AG04450 (cell line): ENCODE measurements at regions of chr11 and their contacts with region 1.

Region 1: GRCh38 chr11:128956401-128957201 is 13.9 kb upstream of the TP53AIP1 start:
- DNase-seq: peak; percentile 47
- H3K4me3 ChIP-seq: no peak overlapping the region
- H3K27ac ChIP-seq: no peak overlapping the region
- H3K27me3 ChIP-seq: peaks cover 5% of the 10 kb centered on the region
- CTCF ChIP-seq: peak; percentile 74

Region 2: GRCh38 chr11:128643661-128644317 is 312.8 kb before region 1 on chr11:
- CTCF ChIA-PET with region 1: no interaction called
- POLR2A ChIA-PET with region 1: no interaction called
- DNase-seq: no peak
- H3K4me3 ChIP-seq: no peak overlapping the region
- H3K27ac ChIP-seq: no peak overlapping the region
- H3K27me3 ChIP-seq: peaks cover 12% of the 10 kb centered on the region
- CTCF ChIP-seq: no peak

Region 3: GRCh38 chr11:128879817-128880216 is 76.8 kb before region 1 on chr11:
- CTCF ChIA-PET with region 1: interaction called, 348 read pairs
- POLR2A ChIA-PET with region 1: interaction called, 6 read pairs
- DNase-seq: no peak
- H3K4me3 ChIP-seq: no peak overlapping the region
- H3K27ac ChIP-seq: no peak overlapping the region
- H3K27me3 ChIP-seq: peaks cover 45% of the 10 kb centered on the region
- CTCF ChIP-seq: no peak

Region 4: DNA sequence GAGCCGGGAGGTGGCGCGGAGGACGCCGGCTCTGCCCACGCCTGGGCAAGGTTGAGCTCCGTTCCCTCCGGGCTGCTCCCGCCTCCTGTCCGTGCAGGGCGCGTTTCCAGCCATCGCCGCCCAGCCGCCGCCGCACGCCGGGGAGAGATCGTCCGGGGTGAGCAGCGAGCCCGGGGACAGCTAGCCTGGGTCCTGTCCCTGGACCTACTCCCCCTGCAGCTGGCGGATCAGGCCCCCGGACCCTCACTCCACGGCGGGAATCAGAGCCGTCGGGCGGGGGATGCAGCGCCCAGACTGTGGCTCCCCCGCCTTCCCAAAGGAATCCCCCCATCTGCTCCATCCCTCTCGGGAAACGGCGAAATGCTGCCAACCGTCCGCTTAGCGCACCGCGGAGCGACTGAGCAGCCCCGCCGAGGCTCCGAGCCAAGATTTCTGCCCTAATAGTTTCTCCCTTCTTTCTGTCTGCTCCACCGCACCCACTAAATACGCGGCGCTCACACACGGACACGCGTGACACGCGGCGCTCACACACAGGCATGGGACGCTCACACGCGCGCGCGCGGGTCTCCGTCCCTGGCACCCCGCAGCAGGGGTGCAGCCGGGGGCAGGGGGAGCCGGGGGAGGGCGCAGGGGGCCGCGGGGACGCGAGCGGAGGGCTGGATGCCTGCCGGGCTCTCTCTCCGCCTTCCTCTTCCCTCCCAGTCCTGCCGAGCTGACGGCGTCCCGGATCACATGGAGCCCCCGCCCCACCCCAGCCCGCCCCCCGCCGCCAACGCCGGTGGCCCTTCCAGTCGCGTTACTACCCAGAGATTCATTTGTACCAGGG is 65.8 kb before region 1 on chr11 and contains the start of gene KCNJ5:
- CTCF ChIA-PET with region 1: interaction called, 348 read pairs
- POLR2A ChIA-PET with region 1: no interaction called
- DNase-seq: no peak
- H3K4me3 ChIP-seq: peak within 1 kb of the TSS; percentile 57
- H3K27ac ChIP-seq: peak within 1 kb of the TSS; percentile 11
- H3K27me3 ChIP-seq: peaks cover 62% of the 10 kb centered on the region
- CTCF ChIP-seq: no peak
- polyA plus RNA-seq, gene KCNJ5: not detected in 2 replicates

Region 5: GRCh38 chr11:128928400-128928799 is 28.2 kb before region 1 on chr11:
- CTCF ChIA-PET with region 1: interaction called, 15 read pairs
- POLR2A ChIA-PET with region 1: no interaction called
- DNase-seq: no peak
- H3K4me3 ChIP-seq: no peak overlapping the region
- H3K27ac ChIP-seq: no peak overlapping the region
- H3K27me3 ChIP-seq: peaks cover 21% of the 10 kb centered on the region
- CTCF ChIP-seq: no peak

Region 6: GRCh38 chr11:129067454-129067853 is 110.9 kb after region 1 on chr11:
- CTCF ChIA-PET with region 1: no interaction called
- POLR2A ChIA-PET with region 1: no interaction called
- DNase-seq: no peak
- H3K4me3 ChIP-seq: no peak overlapping the region
- H3K27ac ChIP-seq: no peak overlapping the region
- H3K27me3 ChIP-seq: no peaks in the 10 kb centered on the region
- CTCF ChIP-seq: no peak